Esophagus muscularis mucosa (tissue), 4 donors: ENCODE measurements at regions of chr5 and their contacts with region 1.

Region 1: DNA sequence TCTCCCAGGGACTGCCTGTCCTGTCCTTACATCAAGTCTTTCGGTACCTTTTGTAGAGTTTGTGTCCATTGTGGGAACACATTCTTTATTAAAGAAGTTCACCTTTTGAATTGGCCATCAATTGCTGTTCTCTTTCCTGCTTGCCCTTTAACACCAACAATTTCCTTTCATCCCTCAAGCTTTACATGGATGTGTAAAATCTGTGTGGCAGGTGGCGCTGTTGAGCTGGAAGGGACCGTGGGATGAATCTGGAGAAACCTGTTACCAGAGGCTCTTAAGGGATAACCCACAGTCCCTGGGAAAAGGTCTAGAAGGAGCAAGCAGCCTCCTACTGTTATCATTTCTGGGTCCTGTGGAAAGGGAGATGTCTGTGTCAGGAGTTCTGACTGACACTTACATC is 7.9 kb upstream of the ZFP62 start:
- DNase-seq: peak; percentile 96
- H3K4me3 ChIP-seq: no peak overlapping the region
- H3K27ac ChIP-seq: peak overlapping the region; percentile 71 to 77 (median 75)
- H3K4me1 ChIP-seq: peaks cover 0 to 29% (median 20%) of the 10 kb centered on the region in 4 donors
- H3K27me3 ChIP-seq: no peaks in the 10 kb centered on the region
- CTCF ChIP-seq: peak; percentile 70 to 81 (median 77)
- EP300 ChIP-seq: no peak
- POLR2A ChIP-seq: no peak

Region 2: DNA sequence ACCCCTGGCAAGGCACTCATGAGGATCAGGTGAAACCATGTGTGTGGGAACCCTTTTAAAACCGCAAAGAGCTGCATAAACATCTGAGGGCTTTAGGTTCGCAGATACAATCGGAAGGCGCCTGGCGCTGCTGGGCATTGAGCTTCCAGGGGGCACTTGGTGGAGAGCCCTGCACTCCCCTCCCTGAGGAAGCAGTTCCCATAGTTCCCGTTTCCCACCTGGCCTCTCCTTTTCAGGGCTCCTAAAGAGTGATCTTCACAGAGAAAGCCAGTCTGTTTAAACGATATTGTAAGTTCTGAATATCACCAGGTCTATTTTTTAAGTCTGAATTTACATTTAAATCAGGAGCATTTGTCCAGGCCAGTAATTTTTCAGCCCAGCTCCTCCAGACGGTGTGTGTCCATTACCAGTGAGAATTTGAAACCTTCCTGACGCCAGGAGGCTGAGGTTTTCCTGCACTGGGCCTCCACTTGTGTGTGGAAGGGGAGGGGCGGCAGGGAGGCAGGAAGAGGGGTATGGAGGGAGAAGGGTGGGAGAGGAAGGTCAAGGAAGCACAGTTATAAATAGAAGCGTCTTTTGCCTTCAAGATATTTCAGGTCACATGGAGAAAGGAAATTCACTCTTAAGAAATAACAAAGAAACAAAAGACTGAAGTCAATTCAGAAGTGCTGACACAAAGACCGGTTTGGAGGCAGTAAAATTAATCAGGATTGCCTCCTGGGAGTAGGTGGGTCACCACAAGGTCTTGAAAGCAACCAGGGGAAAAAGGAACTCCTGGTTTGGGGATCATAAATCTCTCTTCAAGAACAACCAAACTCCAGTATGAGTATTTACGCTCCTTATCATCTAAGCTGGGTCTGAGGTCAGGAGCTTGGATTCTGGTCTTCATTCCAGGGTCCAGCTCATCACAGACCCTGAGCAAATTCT is 52.1 kb before region 1 on chr5:
- intact Hi-C with region 1: no loop called
- DNase-seq: no peak
- H3K4me3 ChIP-seq: peak overlapping the region in 1 of 4 donors; percentile 5
- H3K27ac ChIP-seq: peak overlapping the region; percentile 60 to 72 (median 68)
- H3K4me1 ChIP-seq: peaks cover 36 to 52% (median 51%) of the 10 kb centered on the region in 4 donors
- H3K27me3 ChIP-seq: no peaks in the 10 kb centered on the region
- CTCF ChIP-seq: no peak
- EP300 ChIP-seq: no peak
- POLR2A ChIP-seq: no peak

Region 3: DNA sequence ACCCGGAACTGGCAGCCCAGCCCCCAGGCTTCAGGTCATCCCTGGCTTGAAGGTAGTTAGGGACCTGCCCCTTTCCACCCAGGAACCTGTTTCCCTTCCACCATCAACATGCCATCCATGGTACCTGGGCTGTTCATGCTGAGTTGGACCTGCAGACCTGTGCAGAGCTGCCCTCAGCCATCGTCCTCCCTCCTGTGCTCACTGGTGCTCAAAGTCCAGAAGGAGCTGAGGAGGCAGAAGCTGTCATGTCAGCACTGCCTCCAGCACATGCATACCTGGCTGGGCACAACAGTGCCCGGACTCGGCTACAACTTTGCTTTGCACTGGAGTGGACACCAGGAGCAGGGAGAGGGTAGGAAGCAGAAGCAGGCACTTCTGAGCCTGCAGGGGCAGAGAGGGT is 66.2 kb after region 1 on chr5:
- intact Hi-C with region 1: no loop called
- DNase-seq: no peak
- H3K4me3 ChIP-seq: no peak overlapping the region
- H3K27ac ChIP-seq: no peak overlapping the region
- H3K4me1 ChIP-seq: no peaks in the 10 kb centered on the region
- H3K27me3 ChIP-seq: peaks cover 0 to 24% (median 0%) of the 10 kb centered on the region in 4 donors
- CTCF ChIP-seq: no peak
- EP300 ChIP-seq: no peak
- POLR2A ChIP-seq: no peak

Region 4: GRCh38 chr5:181159286-181159829 is 290.4 kb after region 1 on chr5:
- intact Hi-C with region 1: loop called (anchors 5 kb)
- DNase-seq: peak; percentile 96
- H3K4me3 ChIP-seq: no peak overlapping the region
- H3K27ac ChIP-seq: peak overlapping the region; percentile 65 to 83 (median 76)
- H3K4me1 ChIP-seq: peaks cover 7 to 21% (median 19%) of the 10 kb centered on the region in 4 donors
- H3K27me3 ChIP-seq: peaks cover 0 to 34% (median 2%) of the 10 kb centered on the region in 4 donors
- CTCF ChIP-seq: peak; percentile 82 to 88 (median 83)
- EP300 ChIP-seq: no peak
- POLR2A ChIP-seq: no peak